Activated CD4-positive, alpha-beta memory T cell treated with anti-CD3 and anti-CD28 coated beads for 36 hours (primary cell): ENCODE measurements at regions of chr7 and their contacts with region 1.

Region 1: DNA sequence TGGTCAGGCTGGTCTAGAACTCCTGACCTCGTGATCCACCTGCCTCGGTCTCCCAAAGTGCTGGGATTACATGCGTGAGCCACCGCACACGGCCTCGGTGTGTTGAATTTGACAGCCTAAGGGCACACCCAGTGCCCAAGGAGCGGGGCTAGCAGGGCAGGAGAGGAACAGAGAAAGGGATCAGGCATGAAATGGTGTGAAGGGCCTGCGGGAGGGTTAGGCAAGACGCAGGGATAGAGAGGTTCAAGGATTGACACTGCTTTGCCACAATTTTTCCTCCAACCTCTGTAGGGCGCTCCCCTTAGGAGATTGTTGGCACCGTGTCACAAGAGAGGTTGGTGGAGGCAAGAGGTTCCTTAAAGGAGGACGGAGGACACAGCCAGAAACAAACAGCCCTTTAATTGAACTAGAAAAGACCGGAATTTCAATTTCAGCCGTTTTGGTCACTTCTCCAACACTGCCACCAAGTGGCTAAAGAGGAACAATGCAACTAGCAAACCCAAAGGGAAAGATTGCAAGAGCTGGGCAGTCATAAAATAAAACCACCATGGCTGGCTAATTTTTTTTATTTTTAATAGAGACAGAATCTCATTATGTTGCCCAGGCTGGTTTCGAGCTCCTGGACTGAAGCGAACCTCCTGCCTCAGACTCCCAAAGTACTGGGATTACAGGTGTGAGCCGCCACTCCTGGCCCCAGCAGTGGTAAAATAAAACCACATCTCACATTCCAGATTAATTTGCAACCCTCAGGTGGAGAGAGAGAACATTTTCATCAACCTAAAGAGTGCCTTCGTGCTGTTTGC is 6.9 kb upstream of the CREB3L2 start:
- DNase-seq: peak; percentile 37
- H3K4me3 Mint-ChIP-seq: no peak overlapping the region
- H3K27ac Mint-ChIP-seq: no peak overlapping the region
- H3K4me1 Mint-ChIP-seq: peaks cover 4% of the 10 kb centered on the region
- H3K27me3 Mint-ChIP-seq: no peaks in the 10 kb centered on the region

Region 2: GRCh38 chr7:137606061-137606674 is 402.6 kb before region 1 on chr7:
- CTCF ChIA-PET with region 1: interaction called, 3 read pairs
- POLR2A ChIA-PET with region 1: no interaction called
- intact Hi-C with region 1: loop called (anchors 1 kb)
- DNase-seq: no peak
- H3K4me3 Mint-ChIP-seq: no peak overlapping the region
- H3K27ac Mint-ChIP-seq: no peak overlapping the region
- H3K4me1 Mint-ChIP-seq: no peaks in the 10 kb centered on the region
- H3K27me3 Mint-ChIP-seq: peaks cover 10% of the 10 kb centered on the region

Region 3: GRCh38 chr7:137656227-137656849 is 352.4 kb before region 1 on chr7:
- CTCF ChIA-PET with region 1: interaction called, 14 read pairs
- POLR2A ChIA-PET with region 1: no interaction called
- intact Hi-C with region 1: loop called (anchors 1 kb)
- DNase-seq: peak; percentile 81
- H3K4me3 Mint-ChIP-seq: no peak overlapping the region
- H3K27ac Mint-ChIP-seq: no peak overlapping the region
- H3K4me1 Mint-ChIP-seq: no peaks in the 10 kb centered on the region
- H3K27me3 Mint-ChIP-seq: peaks cover 4% of the 10 kb centered on the region

Region 4: DNA sequence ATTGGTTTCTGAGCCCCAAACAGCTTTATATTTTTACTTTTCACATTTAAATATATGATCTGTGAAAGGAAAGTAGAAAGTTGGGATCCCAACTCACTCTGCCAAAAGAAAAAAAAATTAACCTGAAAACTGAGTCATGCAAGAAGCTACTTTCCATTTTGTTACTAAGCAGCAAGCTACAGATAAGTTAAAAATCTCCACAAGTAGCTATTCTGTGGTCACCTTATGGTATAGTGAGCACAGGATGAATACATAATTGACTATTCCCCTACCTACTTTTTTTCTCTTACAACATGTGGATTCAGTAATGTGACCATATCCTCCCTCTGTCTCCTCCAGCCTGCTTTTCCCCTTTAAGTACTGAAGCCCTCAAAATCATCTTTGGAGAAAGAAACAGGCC is 23.4 kb after region 1 on chr7:
- CTCF ChIA-PET with region 1: no interaction called
- POLR2A ChIA-PET with region 1: no interaction called
- intact Hi-C with region 1: no loop called
- DNase-seq: no peak
- H3K4me3 Mint-ChIP-seq: no peak overlapping the region
- H3K27ac Mint-ChIP-seq: no peak overlapping the region
- H3K4me1 Mint-ChIP-seq: no peaks in the 10 kb centered on the region
- H3K27me3 Mint-ChIP-seq: peaks cover 10% of the 10 kb centered on the region

Region 5: DNA sequence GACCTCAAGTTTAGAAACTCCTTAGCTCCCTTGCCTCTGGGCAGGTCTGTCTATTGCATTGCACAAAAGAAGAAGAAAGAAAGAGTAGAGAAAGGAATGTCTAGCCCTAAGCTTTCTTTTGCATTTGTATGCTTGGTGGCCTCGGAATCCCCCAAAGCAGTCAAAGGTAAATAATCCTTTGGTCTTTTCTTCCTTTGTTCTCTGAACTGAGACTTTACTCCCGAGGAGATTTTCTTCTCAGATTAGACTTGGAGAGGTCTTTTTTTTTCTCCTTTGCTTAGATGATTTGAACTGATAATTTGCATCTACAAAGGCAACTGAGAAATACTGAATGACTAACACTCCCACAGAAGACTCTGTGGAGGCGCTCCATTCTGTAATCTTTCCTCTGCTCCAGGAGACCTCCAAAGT is 160.7 kb after region 1 on chr7:
- CTCF ChIA-PET with region 1: no interaction called
- POLR2A ChIA-PET with region 1: no interaction called
- intact Hi-C with region 1: no loop called
- DNase-seq: no peak
- H3K4me3 Mint-ChIP-seq: no peak overlapping the region
- H3K27ac Mint-ChIP-seq: no peak overlapping the region
- H3K4me1 Mint-ChIP-seq: peaks cover 2% of the 10 kb centered on the region
- H3K27me3 Mint-ChIP-seq: peaks cover 36% of the 10 kb centered on the region